ENCODE measurements at regions of chr1 and their contacts with region 1.

Region 1: GRCh38 chr1:192530254-192530653 is 45.3 kb upstream of the RGS1 start:
- DNase-seq: peak; percentile 61
- H3K4me3 ChIP-seq: no peak overlapping the region
- H3K27ac ChIP-seq: peak overlapping the region; percentile 75
- H3K4me1 ChIP-seq: peaks cover 26% of the 10 kb centered on the region
- H3K27me3 ChIP-seq: no peaks in the 10 kb centered on the region
- CTCF ChIP-seq: no peak
- POLR2A ChIP-seq: no peak

Region 2: DNA sequence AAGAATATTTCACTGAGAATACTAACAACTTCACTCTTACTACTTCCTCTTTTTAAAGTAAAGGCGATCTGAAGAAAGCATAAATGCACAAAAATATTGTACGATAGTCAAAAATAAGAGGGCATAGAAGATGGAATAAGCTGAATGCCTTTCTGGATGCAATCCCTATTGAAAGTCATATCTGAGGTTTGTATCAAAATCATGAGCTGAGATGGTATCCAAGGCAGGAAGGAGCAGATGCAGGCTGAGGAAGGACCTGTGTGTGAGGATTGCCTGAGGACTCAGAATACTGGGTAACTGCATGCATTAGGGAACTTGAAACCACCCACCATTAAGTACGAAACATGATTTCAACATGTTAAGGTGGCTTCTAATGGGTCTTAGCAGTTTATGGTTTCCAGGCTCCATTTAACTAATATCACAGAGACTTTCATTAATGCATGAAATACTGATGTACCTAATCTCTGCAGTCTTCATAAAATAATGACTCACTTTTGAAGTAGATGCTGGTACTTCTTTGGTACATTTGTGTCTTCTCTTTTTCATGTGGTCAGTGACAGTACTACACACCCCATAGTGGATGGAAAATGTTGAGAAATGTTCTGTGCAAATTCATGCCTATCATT is 15.8 kb after region 1 on chr1:
- CTCF ChIA-PET with region 1: interaction called, 5 read pairs
- POLR2A ChIA-PET with region 1: no interaction called
- dilution Hi-C with region 1: no loop called
- intact Hi-C with region 1: loop called (anchors 2 kb)
- DNase-seq: peak; percentile 34
- H3K4me3 ChIP-seq: no peak overlapping the region
- H3K27ac ChIP-seq: peak overlapping the region; percentile 40
- H3K4me1 ChIP-seq: peaks cover 38% of the 10 kb centered on the region
- H3K27me3 ChIP-seq: no peaks in the 10 kb centered on the region
- CTCF ChIP-seq: peak in 1 of 2 donors; percentile 8
- POLR2A ChIP-seq: no peak

Measured in endothelial cell of umbilical vein (primary cell).